Activated naive CD4-positive, alpha-beta T cell treated with anti-CD3 and anti-CD28 coated beads for 36 hours (primary cell): ENCODE measurements at regions of chr18 and their contacts with region 1.

Region 1: DNA sequence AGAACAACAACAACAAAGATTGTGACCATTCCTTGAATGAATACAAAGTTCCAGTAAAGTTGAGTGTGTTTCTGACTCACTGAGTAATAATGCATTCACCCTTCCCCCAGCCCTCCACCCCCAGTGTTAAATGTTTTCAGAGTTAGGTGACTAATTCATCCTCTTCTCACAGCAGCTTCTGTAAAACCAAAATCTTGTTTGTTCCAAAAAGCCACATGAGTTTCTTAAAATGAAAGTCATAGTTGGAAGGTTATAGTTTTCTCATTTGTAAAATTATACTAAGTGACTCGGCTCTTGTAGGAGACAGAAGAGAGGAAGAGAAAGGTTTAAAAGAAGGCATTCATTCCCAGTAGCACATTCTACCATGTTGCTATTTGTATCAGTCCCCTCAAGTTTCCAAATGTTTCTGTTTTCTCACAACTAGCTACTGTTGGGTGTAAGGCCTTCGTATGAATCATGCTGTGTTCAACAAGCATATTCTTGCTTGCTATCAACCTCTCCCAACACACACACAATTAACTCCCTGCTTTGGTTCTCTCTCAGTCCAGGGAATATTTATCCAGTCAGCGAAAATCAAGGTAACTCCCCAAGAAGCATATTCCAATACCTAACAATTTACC is 75.3 kb downstream of the MBD2 start:
- DNase-seq: peak; percentile 92
- H3K4me3 Mint-ChIP-seq: peak overlapping the region; percentile 35
- H3K27ac Mint-ChIP-seq: peak overlapping the region; percentile 97
- H3K4me1 Mint-ChIP-seq: peaks cover 45% of the 10 kb centered on the region
- H3K27me3 Mint-ChIP-seq: no peaks in the 10 kb centered on the region

Region 2: GRCh38 chr18:54127759-54128378 is 21.3 kb before region 1 on chr18:
- CTCF ChIA-PET with region 1: no interaction called
- intact Hi-C with region 1: loop called (anchors 1 kb)
- DNase-seq: peak; percentile 64
- H3K4me3 Mint-ChIP-seq: no peak overlapping the region
- H3K27ac Mint-ChIP-seq: no peak overlapping the region
- H3K4me1 Mint-ChIP-seq: peaks cover 5% of the 10 kb centered on the region
- H3K27me3 Mint-ChIP-seq: no peaks in the 10 kb centered on the region

Region 3: GRCh38 chr18:54181856-54182602 is 32.8 kb after region 1 on chr18:
- CTCF ChIA-PET with region 1: interaction called, 3 read pairs
- intact Hi-C with region 1: loop called (anchors 1 kb)
- DNase-seq: peak; percentile 20
- H3K4me3 Mint-ChIP-seq: no peak overlapping the region
- H3K27ac Mint-ChIP-seq: no peak overlapping the region
- H3K4me1 Mint-ChIP-seq: peaks cover 9% of the 10 kb centered on the region
- H3K27me3 Mint-ChIP-seq: no peaks in the 10 kb centered on the region

Region 4: GRCh38 chr18:54261894-54262293 is 112.7 kb after region 1 on chr18:
- CTCF ChIA-PET with region 1: interaction called, 4 read pairs
- intact Hi-C with region 1: loop called (anchors 1 kb)
- DNase-seq: peak; percentile 79
- H3K4me3 Mint-ChIP-seq: no peak overlapping the region
- H3K27ac Mint-ChIP-seq: peak overlapping the region; percentile 77
- H3K4me1 Mint-ChIP-seq: peaks cover 42% of the 10 kb centered on the region
- H3K27me3 Mint-ChIP-seq: no peaks in the 10 kb centered on the region

Region 5: GRCh38 chr18:54284981-54285785 is 136.0 kb after region 1 on chr18:
- CTCF ChIA-PET with region 1: no interaction called
- intact Hi-C with region 1: loop called (anchors 1 kb)
- DNase-seq: peak; percentile 86
- H3K4me3 Mint-ChIP-seq: no peak overlapping the region
- H3K27ac Mint-ChIP-seq: peak overlapping the region; percentile 17
- H3K4me1 Mint-ChIP-seq: peaks cover 18% of the 10 kb centered on the region
- H3K27me3 Mint-ChIP-seq: no peaks in the 10 kb centered on the region

Region 6: DNA sequence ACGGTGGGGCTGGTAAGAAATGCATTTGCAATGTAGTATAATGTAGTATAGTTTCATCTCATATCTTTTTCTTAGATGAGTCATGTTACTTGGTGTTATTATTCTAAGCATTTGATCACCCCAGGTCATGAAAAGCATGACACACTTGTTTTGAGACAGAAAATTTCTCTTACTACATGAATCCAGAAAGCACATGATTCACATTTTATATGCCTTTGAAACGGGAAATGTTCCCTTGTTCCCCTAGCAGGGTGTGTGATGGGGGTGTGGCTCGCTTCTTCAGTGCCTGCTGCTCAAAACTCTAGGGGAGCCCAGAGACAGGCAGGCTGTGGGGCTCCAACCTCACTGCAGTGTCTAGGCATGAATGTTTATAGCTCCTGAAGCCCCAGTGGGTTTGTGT is 563.1 kb after region 1 on chr18:
- CTCF ChIA-PET with region 1: no interaction called
- intact Hi-C with region 1: loop called (anchors 5 kb)
- DNase-seq: peak; percentile 38
- H3K4me3 Mint-ChIP-seq: no peak overlapping the region
- H3K27ac Mint-ChIP-seq: no peak overlapping the region
- H3K4me1 Mint-ChIP-seq: peaks cover 26% of the 10 kb centered on the region
- H3K27me3 Mint-ChIP-seq: peaks cover 7% of the 10 kb centered on the region